ENCODE measurements at regions of chr7 and their contacts with region 1.

Region 1: DNA sequence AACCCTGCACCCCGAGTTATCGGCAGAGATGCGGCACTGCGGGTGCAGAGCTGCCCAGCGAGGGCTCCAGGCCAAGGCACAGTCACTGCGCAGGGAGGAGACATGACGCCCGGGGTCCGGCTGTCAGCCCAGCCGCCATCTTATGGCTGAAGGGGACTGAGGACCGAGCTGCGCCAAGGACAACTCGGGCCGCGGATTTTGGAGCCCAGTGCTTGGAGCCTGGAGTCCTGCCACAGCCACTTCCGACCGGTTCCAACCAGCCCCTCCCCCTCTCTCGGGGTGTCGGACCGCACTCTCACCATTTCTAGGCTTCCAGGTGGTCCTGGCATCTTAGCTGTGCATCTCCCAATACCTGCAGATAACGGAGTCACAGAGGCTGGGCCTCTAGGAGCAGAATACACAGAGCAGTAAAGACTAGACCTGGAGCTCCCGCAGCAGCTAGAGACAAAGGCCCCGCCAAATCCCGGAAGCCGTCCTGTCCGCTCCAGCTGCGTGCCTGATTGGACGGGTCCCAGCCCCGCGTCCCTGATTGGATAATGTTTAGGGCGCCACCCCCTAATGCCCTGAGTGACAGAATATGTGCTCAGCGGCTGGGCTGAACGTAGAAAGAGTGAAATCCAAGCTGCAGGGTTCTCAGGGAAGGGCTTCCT is at the start of gene ZNF680:
- DNase-seq: peak; percentile 96
- ATAC-seq: peak; percentile 99
- H3K4me3 Mint-ChIP-seq: peak within 1 kb of the TSS; percentile 100
- H3K27ac Mint-ChIP-seq: peak within 1 kb of the TSS; percentile 100
- H3K4me1 Mint-ChIP-seq: peaks cover 20% of the 10 kb centered on the region
- H3K27me3 Mint-ChIP-seq: no peaks in the 10 kb centered on the region
- CTCF ChIP-seq: no peak
- total RNA-seq, gene ZNF680: 13.6 to 13.7 TPM

Region 2: GRCh38 chr7:64485623-64486022 is 77.1 kb before region 1 on chr7:
- CTCF ChIA-PET with region 1: no interaction called
- POLR2A ChIA-PET with region 1: no interaction called
- intact Hi-C with region 1: no loop called
- DNase-seq: no peak
- ATAC-seq: no peak
- H3K4me3 Mint-ChIP-seq: no peak overlapping the region
- H3K27ac Mint-ChIP-seq: no peak overlapping the region
- H3K4me1 Mint-ChIP-seq: no peaks in the 10 kb centered on the region
- H3K27me3 Mint-ChIP-seq: no peaks in the 10 kb centered on the region
- CTCF ChIP-seq: no peak

Region 3: DNA sequence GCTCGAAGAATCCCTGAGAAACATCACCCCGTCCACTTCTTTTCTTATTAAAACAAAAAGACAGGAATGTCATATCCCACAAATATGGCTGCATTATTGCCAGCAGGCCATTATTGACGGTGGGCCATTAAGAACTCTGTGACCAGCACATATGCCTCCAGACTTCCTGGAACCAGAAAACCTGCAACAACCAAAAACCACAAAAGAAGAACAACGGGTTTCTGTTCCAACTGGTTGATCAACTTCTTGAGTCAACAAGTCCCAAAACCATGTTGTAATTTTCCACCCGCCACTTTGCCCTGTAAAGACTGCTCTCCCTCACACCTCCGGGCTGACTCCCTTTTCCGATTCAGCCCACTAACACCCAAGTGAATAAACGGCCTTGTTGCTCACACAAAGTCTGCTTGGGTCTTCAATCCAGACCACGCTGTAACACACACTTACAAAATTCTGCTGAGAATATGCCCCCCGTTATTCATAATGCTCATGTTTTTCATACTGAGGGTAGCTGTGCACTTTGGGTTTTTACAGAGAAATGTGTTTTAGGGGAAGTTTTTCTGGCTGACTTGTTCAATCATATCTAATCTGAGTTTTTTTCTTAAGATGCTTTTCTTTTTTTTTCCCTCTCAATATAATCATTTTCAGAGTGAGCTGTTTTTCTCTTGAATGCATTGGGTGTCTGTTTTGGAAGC is 123.9 kb after region 1 on chr7:
- CTCF ChIA-PET with region 1: no interaction called
- POLR2A ChIA-PET with region 1: no interaction called
- intact Hi-C with region 1: loop called (anchors 10 kb)
- DNase-seq: peak; percentile 71
- ATAC-seq: peak; percentile 83
- H3K4me3 Mint-ChIP-seq: peak overlapping the region; percentile 11
- H3K27ac Mint-ChIP-seq: peak overlapping the region; percentile 91
- H3K4me1 Mint-ChIP-seq: peaks cover 51% of the 10 kb centered on the region
- H3K27me3 Mint-ChIP-seq: no peaks in the 10 kb centered on the region
- CTCF ChIP-seq: no peak